Panc1 (cell line): ENCODE measurements at regions of chr17 and their contacts with region 1.

Region 1: DNA sequence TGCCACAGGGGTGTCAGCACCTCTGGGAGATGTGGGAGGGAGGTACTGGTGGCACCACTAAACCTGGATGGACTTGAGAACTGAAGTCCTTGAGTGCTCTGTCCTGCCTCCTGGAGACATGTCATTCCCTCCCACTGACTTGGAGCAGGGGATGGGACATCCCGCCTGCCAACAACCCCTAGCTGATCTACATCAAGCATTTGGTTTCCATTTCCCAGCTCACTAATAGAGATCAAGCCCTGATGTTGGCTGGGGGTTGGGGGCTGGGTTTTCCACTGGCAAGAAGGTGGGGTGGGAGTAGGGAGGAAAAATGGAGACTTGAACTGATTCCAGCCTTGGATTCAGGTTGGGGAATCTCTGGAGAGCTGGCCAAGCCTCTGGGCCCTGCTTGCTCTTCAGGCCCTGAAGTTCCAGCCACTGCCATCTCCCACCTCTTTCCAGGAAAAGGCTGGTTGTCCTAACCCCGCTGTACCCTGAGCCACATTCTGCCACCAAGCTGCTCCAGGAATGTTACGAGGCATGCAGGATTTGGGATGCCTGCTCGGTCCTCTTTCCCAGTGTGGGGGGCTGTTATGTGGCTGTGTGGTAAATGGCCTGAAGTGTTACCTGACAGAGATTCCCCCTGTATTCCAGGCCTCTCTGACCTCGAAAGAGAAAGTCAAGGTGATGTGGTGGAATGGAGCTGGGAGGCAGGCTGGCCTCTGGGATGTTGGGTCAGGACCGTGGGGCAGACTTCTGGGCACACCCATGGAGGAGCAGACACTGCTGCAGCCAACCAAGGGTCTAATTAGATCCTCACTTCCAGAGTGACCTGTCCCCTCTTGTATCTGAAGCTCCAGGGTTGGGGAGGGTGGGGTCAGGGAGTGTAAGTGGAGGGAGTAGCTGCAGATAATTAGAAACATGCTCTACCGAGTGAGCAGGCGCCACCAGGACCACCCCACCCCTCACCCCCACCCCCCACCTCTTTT is 16.7 kb downstream of the IGFBP4 start:
- DNase-seq: no peak
- ATAC-seq: 0 out of 2 replicates have a peak, but pooled peaks have one; percentile 12
- H3K4me3 ChIP-seq: no peak overlapping the region
- H3K27ac ChIP-seq: no peak overlapping the region
- H3K4me1 ChIP-seq: peaks cover 3% of the 10 kb centered on the region; the same call in 1 of the 2 replicates
- H3K27me3 ChIP-seq: no peaks in the 10 kb centered on the region
- CTCF ChIP-seq: no peak

Region 2: GRCh38 chr17:40259505-40259904 is 200.4 kb before region 1 on chr17:
- CTCF ChIA-PET with region 1: no interaction called
- POLR2A ChIA-PET with region 1: interaction called, 20 read pairs
- in situ Hi-C with region 1: no loop called
- intact Hi-C with region 1: no loop called
- DNase-seq: no peak
- ATAC-seq: no peak
- H3K4me3 ChIP-seq: no peak overlapping the region
- H3K27ac ChIP-seq: no peak overlapping the region
- H3K4me1 ChIP-seq: no peaks in the 10 kb centered on the region
- H3K27me3 ChIP-seq: no peaks in the 10 kb centered on the region
- CTCF ChIP-seq: no peak

Region 3: GRCh38 chr17:40707720-40708119 is 247.8 kb after region 1 on chr17:
- CTCF ChIA-PET with region 1: no interaction called
- POLR2A ChIA-PET with region 1: no interaction called
- in situ Hi-C with region 1: no loop called
- intact Hi-C with region 1: no loop called
- DNase-seq: no peak
- ATAC-seq: no peak
- H3K4me3 ChIP-seq: no peak overlapping the region
- H3K27ac ChIP-seq: no peak overlapping the region
- H3K4me1 ChIP-seq: no peaks in the 10 kb centered on the region
- H3K27me3 ChIP-seq: 0 out of 2 replicates have a peak, but pooled peaks cover 3% of the 10 kb centered on the region
- CTCF ChIP-seq: no peak